ENCODE measurements at regions of chrX and their contacts with region 1.

Region 1: GRCh38 chrX:27953171-27953570 is 28.1 kb downstream of the DCAF8L1 start:
- DNase-seq: no peak
- H3K4me3 ChIP-seq: no peak overlapping the region
- H3K27ac ChIP-seq: no peak overlapping the region
- H3K4me1 ChIP-seq: no peaks in the 10 kb centered on the region
- H3K27me3 ChIP-seq: no peaks in the 10 kb centered on the region
- CTCF ChIP-seq: no peak
- POLR2A ChIP-seq: no peak

Region 2: GRCh38 chrX:27715610-27716009 is 237.6 kb before region 1 on chrX:
- CTCF ChIA-PET with region 1: no interaction called
- POLR2A ChIA-PET with region 1: no interaction called
- dilution Hi-C with region 1: no loop called
- intact Hi-C with region 1: no loop called
- DNase-seq: no peak
- H3K4me3 ChIP-seq: no peak overlapping the region
- H3K27ac ChIP-seq: no peak overlapping the region
- H3K4me1 ChIP-seq: no peaks in the 10 kb centered on the region
- H3K27me3 ChIP-seq: no peaks in the 10 kb centered on the region
- CTCF ChIP-seq: no peak
- POLR2A ChIP-seq: no peak

Region 3: DNA sequence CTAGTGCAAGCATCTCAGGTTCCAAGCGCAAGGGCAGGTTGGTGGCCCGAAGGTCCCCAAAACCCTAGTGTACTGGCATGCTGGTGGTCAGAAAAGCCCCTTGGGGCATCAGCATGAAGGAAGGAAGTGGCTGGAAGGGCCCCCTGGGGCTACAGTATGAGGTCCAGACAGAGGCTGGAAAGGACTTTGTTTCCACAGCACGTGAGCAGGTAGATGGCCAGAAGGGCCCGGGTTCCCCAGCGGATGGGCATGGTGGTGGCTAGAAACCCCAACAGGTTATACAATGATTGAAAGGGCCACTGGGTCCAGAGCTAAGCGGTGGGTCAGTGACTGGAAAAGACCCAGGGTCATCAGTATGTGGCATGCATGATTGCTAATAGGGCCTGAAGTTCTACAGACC is 62.8 kb after region 1 on chrX:
- CTCF ChIA-PET with region 1: no interaction called
- POLR2A ChIA-PET with region 1: no interaction called
- dilution Hi-C with region 1: no loop called
- intact Hi-C with region 1: loop called (anchors 2 kb)
- DNase-seq: no peak
- H3K4me3 ChIP-seq: no peak overlapping the region
- H3K27ac ChIP-seq: no peak overlapping the region
- H3K4me1 ChIP-seq: no peaks in the 10 kb centered on the region
- H3K27me3 ChIP-seq: no peaks in the 10 kb centered on the region
- CTCF ChIP-seq: no peak
- POLR2A ChIP-seq: no peak

Region 4: GRCh38 chrX:28225508-28225907 is 272.3 kb after region 1 on chrX:
- CTCF ChIA-PET with region 1: no interaction called
- POLR2A ChIA-PET with region 1: no interaction called
- dilution Hi-C with region 1: no loop called
- intact Hi-C with region 1: no loop called
- DNase-seq: no peak
- H3K4me3 ChIP-seq: no peak overlapping the region
- H3K27ac ChIP-seq: no peak overlapping the region
- H3K4me1 ChIP-seq: no peaks in the 10 kb centered on the region
- H3K27me3 ChIP-seq: no peaks in the 10 kb centered on the region
- CTCF ChIP-seq: no peak
- POLR2A ChIP-seq: no peak